ENCODE measurements at regions of chr2 and their contacts with region 1.

Region 1: DNA sequence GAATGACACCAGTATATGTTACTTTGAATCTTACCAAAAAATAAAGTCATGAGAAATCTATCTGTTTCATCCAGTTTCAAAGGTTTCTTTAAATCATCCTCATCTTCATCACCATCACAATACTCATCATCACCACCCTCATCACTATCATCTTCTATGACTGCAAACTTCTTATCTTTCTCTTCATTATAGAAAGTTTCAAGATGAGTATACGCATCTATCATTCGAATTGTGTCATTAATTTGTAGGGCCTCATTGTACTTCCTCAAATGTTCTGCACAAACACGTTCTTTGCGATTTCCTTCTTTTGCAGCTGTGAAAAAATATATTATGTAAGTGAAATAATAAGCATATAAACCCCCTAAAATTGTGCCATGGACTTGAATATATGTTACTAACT is 34.1 kb upstream of the FAP start:
- DNase-seq: no peak
- CTCF ChIP-seq: no peak

Region 2: GRCh38 chr2:162293122-162293786 is 15.9 kb after region 1 on chr2:
- CTCF ChIA-PET with region 1: interaction called, 66 read pairs
- POLR2A ChIA-PET with region 1: no interaction called
- DNase-seq: no peak
- CTCF ChIP-seq: no peak